B cell (primary cell): ENCODE measurements at regions of chr2 and their contacts with region 1.

Region 1: DNA sequence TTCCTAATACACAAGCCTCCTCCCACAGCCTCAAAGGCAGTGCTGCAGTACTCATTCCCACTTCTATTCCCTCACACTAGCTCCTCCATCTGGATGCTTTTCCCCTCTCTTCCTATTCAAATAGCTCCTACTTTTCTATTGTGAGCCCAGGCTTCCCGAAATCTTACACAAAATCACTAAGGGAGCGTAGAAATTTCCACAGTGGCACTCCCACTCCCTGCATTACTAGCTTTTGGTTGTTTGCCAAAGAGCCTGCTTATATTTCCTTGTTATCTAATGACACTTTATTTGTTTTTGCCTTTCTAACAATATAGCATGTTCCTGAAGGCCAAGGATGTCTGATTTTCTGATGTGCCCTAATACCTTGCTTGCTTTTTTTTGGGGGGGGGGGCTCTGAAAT is 10.9 kb downstream of the EPAS1 start:
- DNase-seq: no peak
- ATAC-seq: no peak
- H3K4me3 ChIP-seq: no peak overlapping the region
- H3K4me3 Mint-ChIP-seq: no peak overlapping the region
- H3K27ac ChIP-seq: no peak overlapping the region
- H3K27ac Mint-ChIP-seq: no peak overlapping the region
- H3K4me1 ChIP-seq: no peaks in the 10 kb centered on the region
- H3K4me1 Mint-ChIP-seq: no peaks in the 10 kb centered on the region
- H3K27me3 ChIP-seq: peaks cover 0 to 12% (median 2%) of the 10 kb centered on the region in 4 experiments
- H3K27me3 Mint-ChIP-seq: peaks cover 37% of the 10 kb centered on the region
- CTCF ChIP-seq: no peak

Region 2: DNA sequence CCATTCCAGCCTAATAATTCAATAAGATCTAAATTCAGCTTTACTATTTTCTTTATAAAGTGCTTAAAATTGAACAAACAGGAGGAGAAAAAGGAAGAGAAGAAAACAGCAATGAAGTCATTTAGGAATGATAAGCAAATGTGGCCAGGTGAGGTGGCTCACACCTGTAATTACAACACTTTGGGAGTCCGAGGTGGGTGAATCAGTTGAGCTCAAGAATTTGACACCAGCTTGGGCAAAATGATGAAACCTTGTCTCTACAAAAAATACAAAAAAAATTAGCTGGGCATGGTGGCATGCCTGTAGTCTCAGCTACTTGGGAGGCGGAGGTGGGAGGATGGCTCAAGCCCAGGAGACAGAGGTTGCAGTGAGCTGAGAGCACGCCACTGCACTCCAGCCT is 1817.4 kb before region 1 on chr2:
- CTCF ChIA-PET with region 1: no interaction called
- POLR2A ChIA-PET with region 1: no interaction called
- intact Hi-C with region 1: no loop called
- DNase-seq: no peak
- ATAC-seq: no peak
- H3K4me3 ChIP-seq: no peak overlapping the region
- H3K4me3 Mint-ChIP-seq: no peak overlapping the region
- H3K27ac ChIP-seq: no peak overlapping the region
- H3K27ac Mint-ChIP-seq: no peak overlapping the region
- H3K4me1 ChIP-seq: no peaks in the 10 kb centered on the region
- H3K4me1 Mint-ChIP-seq: no peaks in the 10 kb centered on the region
- H3K27me3 ChIP-seq: no peaks in the 10 kb centered on the region
- H3K27me3 Mint-ChIP-seq: no peaks in the 10 kb centered on the region
- CTCF ChIP-seq: no peak

Region 3: DNA sequence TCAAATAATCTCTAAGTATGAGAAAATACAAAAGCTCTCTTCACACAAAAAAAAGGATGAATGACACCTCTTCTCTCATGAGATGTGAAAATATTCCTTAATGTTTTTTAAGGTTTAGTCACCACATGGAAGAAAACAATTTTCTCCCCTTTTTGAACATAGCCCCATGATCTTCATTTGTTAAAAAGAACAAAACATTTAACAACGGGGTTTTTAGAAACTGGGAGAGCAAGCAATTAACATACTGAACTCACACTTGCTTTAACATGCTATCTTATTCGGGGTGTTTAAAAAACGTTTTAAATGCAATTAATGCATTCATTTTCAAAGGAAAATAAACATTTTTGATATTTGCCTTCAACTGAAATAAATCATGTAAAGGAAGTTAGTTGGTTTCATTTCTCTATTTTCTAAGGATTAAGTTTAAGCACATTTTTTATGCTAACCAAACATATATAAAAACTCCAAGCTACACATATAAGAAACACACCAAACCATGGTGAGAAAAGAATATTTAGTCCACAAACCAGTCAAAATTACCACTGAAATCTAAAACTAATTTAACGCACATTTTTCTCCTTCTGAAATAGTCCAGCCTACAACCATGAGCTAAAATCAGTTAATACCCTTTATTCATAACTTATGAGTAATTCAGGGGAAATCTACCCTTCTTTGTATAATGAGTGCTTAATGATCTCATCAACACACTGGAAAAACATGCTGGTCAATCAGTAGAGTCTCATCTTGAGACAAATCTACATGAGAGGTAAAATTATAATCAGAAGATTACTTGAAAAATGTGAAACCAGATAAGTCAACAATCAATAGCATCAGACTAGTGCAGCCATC is 1590.0 kb after region 1 on chr2:
- CTCF ChIA-PET with region 1: no interaction called
- POLR2A ChIA-PET with region 1: interaction called, 10 read pairs
- intact Hi-C with region 1: no loop called
- DNase-seq: peak; percentile 41
- ATAC-seq: peak; percentile 48
- H3K4me3 ChIP-seq: peak overlapping the region in 3 of 5 experiments; percentile 6 to 59 (median 12)
- H3K4me3 Mint-ChIP-seq: peak overlapping the region; percentile 80
- H3K27ac ChIP-seq: peak overlapping the region; percentile 54 to 86
- H3K27ac Mint-ChIP-seq: peak overlapping the region; percentile 90
- H3K4me1 ChIP-seq: peaks cover 42 to 63% of the 10 kb centered on the region in 2 donors
- H3K4me1 Mint-ChIP-seq: peaks cover 78% of the 10 kb centered on the region
- H3K27me3 ChIP-seq: no peaks in the 10 kb centered on the region
- H3K27me3 Mint-ChIP-seq: no peaks in the 10 kb centered on the region
- CTCF ChIP-seq: no peak